ENCODE measurements at regions of chr10 and their contacts with region 1.

Region 1: GRCh38 chr10:14737808-14738545 is 36.7 kb downstream of the FAM107B start:
- DNase-seq: no peak

Region 2: GRCh38 chr10:14782691-14783363 is 44.9 kb after region 1 on chr10:
- intact Hi-C with region 1: loop called (anchors 2 kb)
- DNase-seq: no peak

Region 3: GRCh38 chr10:14959276-14960057 is 221.5 kb after region 1 on chr10 and contains the start of gene MEIG1:
- intact Hi-C with region 1: no loop called
- DNase-seq: peak; percentile 95
- total RNA-seq, gene MEIG1: 0.54 TPM